AG04450 (cell line): ENCODE measurements at regions of chr7 and their contacts with region 1.

Region 1: GRCh38 chr7:26853788-26854393 is 10.5 kb downstream of the SKAP2 start:
- DNase-seq: no peak
- H3K4me3 ChIP-seq: no peak overlapping the region
- H3K27ac ChIP-seq: no peak overlapping the region
- H3K27me3 ChIP-seq: no peaks in the 10 kb centered on the region
- CTCF ChIP-seq: peak; percentile 69

Region 2: GRCh38 chr7:26337232-26337865 is 516.5 kb before region 1 on chr7:
- CTCF ChIA-PET with region 1: no interaction called
- POLR2A ChIA-PET with region 1: no interaction called
- DNase-seq: no peak
- H3K4me3 ChIP-seq: no peak overlapping the region
- H3K27ac ChIP-seq: no peak overlapping the region
- H3K27me3 ChIP-seq: no peaks in the 10 kb centered on the region
- CTCF ChIP-seq: no peak

Region 3: DNA sequence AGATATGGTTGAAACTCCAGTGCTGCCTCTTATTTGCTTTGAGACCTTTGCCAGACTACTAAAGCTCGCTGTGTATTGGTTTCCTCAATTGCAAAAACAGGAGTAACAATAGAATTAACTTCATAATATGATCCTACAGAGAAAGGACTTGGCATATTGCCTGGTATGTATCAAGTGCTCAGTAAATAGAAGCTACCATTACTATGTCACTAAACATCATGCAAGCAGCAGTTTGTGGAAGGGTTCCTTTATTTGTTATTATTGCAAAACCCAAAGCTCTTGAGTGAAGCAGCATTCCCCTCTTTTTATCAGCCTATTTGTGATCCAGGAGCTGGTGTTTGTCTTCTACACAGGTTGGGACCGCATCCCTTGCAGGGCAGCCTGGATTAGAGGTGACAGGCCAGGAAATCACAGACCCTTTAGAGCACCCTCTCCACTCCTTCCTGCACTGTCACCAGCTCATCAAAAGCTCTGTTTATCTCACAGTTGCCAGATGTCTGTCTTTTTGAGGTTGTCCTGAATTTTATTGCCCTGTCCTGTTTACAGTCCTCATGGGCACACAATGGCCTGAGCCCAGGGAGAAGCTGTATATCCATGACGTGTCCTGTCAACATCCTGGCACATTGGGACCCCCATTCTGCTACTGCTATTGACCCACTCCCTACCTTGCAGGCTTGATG is 440.7 kb before region 1 on chr7:
- CTCF ChIA-PET with region 1: no interaction called
- POLR2A ChIA-PET with region 1: no interaction called
- DNase-seq: no peak
- H3K4me3 ChIP-seq: no peak overlapping the region
- H3K27ac ChIP-seq: no peak overlapping the region
- H3K27me3 ChIP-seq: no peaks in the 10 kb centered on the region
- CTCF ChIP-seq: no peak

Region 4: GRCh38 chr7:26864309-26865093 is 10.6 kb after region 1 on chr7 and contains the start of gene SKAP2:
- CTCF ChIA-PET with region 1: interaction called, 16 read pairs
- POLR2A ChIA-PET with region 1: no interaction called
- DNase-seq: peak; percentile 98
- H3K4me3 ChIP-seq: peak within 1 kb of the TSS; percentile 90
- H3K27ac ChIP-seq: peak within 1 kb of the TSS; percentile 93
- H3K27me3 ChIP-seq: no peaks in the 10 kb centered on the region
- CTCF ChIP-seq: no peak
- polyA plus RNA-seq, gene SKAP2: 14.1 and 16.0 TPM in 2 replicates

Region 5: DNA sequence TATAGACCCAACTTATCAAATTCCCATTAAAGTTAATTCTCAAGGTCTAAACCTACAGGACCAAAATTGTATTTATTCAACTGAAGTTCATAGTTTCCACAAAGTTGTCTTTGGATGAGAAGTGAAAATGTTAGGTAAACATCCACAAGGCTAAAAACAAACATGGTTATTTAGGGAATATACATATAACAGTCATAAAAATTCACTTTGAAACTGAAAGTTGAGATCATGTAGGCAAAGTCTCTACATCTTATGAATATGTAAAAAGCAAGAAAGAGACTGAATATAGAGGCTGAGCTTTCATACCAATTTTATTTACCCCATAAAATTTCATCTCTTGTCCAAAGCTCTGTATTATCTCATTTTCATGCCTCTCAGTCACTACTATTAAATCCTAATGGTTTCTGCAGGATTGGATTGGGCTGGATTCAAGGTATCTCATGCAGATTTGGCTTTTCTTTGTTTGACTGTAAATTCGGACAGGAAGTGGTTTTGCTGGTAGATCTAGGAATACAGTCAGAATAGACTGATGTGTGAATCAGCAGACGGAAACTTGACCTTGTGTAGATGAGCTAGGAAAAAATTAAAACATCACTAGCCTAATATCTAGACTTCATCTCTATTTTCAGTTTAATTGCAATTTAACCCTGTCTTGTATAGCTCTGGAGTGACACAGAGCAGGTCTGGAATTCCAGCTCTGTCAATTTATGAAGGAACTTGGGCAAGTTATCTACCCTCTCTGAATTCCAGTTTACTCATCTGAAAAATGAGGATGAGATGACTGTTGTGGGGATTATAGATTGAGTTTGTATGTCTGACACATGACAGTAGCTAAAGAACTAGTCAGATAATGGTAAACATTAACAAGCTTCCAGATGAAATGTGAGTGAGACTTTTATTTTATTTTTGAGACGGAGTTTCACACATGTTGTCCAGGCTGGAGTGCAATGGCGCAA is 37.8 kb after region 1 on chr7:
- CTCF ChIA-PET with region 1: no interaction called
- POLR2A ChIA-PET with region 1: no interaction called
- DNase-seq: no peak
- H3K4me3 ChIP-seq: no peak overlapping the region
- H3K27ac ChIP-seq: no peak overlapping the region
- H3K27me3 ChIP-seq: peaks cover 3% of the 10 kb centered on the region
- CTCF ChIP-seq: no peak

Region 6: DNA sequence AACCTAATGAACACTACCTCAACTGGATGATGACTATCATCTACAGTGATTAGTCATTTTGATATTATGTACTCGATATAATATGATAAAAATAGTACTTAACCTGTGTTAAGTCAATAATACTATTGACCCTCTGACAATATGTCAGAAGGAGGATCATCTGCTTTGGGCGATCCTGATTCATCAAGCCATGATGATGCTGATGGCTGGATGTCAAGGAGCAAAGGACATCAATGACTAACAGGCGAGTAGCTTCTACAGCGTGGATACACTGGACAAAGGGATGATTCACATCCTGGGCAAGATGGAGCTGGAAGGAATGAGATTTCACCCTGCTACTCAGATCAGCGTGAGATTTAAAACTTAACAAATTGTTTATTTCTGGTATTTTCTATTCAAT is 104.9 kb after region 1 on chr7:
- CTCF ChIA-PET with region 1: no interaction called
- POLR2A ChIA-PET with region 1: no interaction called
- DNase-seq: peak; percentile 29
- H3K4me3 ChIP-seq: no peak overlapping the region
- H3K27ac ChIP-seq: no peak overlapping the region
- H3K27me3 ChIP-seq: no peaks in the 10 kb centered on the region
- CTCF ChIP-seq: no peak

Region 7: DNA sequence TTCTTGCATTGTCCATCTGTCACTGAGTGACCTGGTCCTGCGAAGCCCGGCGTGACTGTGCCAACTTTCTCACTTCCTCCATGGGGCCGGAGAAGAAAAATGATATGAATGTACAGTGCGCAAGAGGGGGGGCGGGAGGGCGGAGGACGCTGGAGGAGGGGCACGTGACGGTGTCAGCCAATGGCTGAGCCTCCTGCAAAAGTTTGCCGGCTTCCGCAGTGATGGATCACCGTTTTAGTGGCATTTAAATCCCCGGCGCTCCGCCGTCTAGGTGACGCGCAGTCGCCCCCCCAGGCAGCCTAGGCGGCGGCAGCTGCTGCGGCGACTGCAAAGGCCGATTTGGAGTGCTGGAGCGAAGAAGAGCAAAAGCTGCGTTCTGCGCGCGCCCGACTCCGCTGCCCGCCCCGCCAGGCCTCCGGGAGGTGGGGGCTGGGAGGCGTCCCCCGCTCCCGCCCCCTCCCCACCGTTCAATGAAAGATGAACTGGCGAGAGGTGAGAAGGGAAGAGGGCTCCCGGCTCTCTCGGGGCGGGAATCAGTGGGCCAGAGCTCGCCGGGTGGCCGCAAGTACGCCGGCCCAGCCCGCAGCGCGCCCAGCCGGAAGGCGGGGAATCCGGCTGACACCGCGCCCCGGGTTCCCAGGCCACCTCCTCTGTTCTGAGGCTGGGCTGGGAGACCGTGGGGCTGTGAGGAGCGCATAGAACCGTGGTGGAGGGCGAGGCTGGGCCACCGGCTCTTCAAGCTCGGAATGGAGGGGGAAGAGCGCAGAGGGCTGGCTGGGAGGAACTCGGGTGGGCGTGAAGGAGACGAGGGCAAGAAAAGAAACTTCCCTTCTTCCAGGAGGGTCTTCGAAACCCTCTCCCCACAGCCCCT is 242.2 kb after region 1 on chr7 and contains the start of gene HOXA1:
- CTCF ChIA-PET with region 1: interaction called, 27 read pairs
- POLR2A ChIA-PET with region 1: interaction called, 6 read pairs
- DNase-seq: peak; percentile 90
- H3K4me3 ChIP-seq: peak within 1 kb of the TSS; percentile 91
- H3K27ac ChIP-seq: peak within 1 kb of the TSS; percentile 94
- H3K27me3 ChIP-seq: no peaks in the 10 kb centered on the region
- CTCF ChIP-seq: no peak
- polyA plus RNA-seq, gene HOXA1: 2.6 and 2.9 TPM in 2 replicates

Region 8: GRCh38 chr7:27110186-27111031 is 256.5 kb after region 1 on chr7:
- CTCF ChIA-PET with region 1: interaction called, 26 read pairs
- POLR2A ChIA-PET with region 1: interaction called, 4 read pairs
- DNase-seq: peak; percentile 68
- H3K4me3 ChIP-seq: peak overlapping the region; percentile 84
- H3K27ac ChIP-seq: peak overlapping the region; percentile 95
- H3K27me3 ChIP-seq: no peaks in the 10 kb centered on the region
- CTCF ChIP-seq: no peak

Region 9: GRCh38 chr7:27122077-27122910 is 268.4 kb after region 1 on chr7:
- CTCF ChIA-PET with region 1: interaction called, 14 read pairs
- POLR2A ChIA-PET with region 1: no interaction called
- DNase-seq: no peak
- H3K4me3 ChIP-seq: peak overlapping the region; percentile 60
- H3K27ac ChIP-seq: peak overlapping the region; percentile 94
- H3K27me3 ChIP-seq: no peaks in the 10 kb centered on the region
- CTCF ChIP-seq: no peak

Region 10: DNA sequence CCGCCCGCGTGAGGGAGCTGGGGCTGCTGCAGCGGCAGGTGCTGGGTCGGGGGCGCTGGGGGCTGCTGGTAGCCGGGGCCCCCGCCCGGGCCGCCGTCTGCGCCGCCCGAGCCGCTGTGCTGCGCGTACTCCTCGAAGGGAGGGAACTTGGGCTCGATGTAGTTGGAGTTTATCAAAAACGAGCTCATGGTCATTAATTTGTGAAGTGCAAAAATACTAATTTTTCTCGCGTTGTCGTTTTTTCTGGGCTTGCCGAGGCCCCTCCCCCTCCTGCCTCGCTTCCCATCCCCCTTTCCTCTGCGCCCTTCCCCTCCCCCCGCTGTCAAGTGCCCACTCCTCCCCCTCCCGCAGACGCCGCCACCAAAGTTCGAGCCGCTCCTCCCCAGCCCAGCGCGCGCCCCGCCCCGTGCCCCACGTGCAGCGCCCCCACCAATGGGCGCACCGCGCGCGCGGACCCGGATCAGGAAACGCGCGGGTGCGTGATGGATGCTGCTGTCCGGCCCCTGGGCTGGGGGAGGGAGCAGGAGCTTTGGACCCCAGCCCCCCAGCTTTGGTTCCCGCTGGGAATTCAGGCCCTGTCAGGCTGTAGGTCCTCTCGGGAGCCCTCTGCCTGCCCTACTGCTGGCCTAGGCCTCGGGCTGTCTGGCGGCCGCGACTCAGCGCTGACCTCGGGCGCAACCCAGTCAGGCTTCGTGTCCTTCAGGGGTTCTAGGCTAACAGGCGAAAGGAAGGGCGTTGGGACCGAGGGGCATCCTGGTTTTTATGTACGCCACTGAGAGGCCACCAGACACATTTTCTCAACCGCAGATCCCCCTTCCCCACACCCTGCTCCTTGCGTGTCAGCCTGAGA is 276.9 kb after region 1 on chr7 and contains the start of gene HOXA4:
- CTCF ChIA-PET with region 1: interaction called, 10 read pairs
- POLR2A ChIA-PET with region 1: no interaction called
- DNase-seq: no peak
- H3K4me3 ChIP-seq: peak within 1 kb of the TSS; percentile 68
- H3K27ac ChIP-seq: peak within 1 kb of the TSS; percentile 33
- H3K27me3 ChIP-seq: no peaks in the 10 kb centered on the region
- CTCF ChIP-seq: no peak
- polyA plus RNA-seq, gene HOXA4: 5.4 and 5.8 TPM in 2 replicates